Activated T-helper 2 cell treated with anti-CD3 and anti-CD28 coated beads, Interferon-gamma antibody, Interleukin-2, Interleukin-4, amounts not matched to agents 10 μg/mL and 5 μg/mL and 100 μg/mL, durations not matched to agents 14 hours and 24 hours and 36 hours (primary cell): ENCODE measurements at regions of chr6 and their contacts with region 1.

Region 1: GRCh38 chr6:73329201-73329600 is 24.9 kb downstream of the DPPA5 start:
- DNase-seq: no peak
- H3K4me3 Mint-ChIP-seq: no peak overlapping the region
- H3K27ac Mint-ChIP-seq: no peak overlapping the region
- H3K4me1 Mint-ChIP-seq: peaks cover 7% of the 10 kb centered on the region
- H3K27me3 Mint-ChIP-seq: peaks cover 35% of the 10 kb centered on the region

Region 2: DNA sequence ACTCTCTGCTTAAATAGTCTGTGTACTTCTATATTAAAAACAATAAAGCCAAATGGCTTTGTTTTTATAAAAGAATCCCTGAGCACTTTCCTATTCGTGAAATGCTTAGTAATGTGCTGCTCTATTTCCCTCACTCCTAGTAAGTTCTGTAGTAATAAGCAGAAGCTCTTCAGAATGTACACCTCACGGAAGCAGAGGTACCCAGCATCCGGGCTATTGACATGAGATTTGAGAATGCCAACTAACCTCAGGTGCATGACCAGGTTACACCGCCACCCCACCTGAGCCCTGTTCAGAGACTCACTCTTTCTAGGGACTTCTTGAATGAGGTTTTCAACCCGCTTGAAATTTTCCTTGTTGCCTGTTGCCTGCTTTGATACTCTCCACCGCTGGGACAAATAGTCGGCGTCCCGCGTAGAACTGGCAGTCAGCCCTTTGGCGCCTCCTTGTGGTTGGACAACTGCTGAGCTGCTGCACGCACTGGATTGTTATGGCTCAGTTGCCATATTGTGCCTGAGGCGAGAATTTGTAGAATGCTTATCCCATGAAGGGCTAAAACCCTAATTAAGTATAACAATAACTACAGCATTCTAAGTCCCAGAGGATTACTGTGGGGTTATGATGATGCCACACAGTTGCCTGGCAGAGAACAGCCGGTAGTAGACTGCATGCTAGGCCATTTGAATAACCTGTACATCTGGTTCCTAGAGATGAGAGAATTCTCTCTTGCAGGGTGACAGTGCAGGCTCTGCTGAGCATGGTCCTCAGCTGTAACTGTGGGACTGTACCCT is 199.4 kb before region 1 on chr6:
- intact Hi-C with region 1: loop called (anchors 5 kb)
- DNase-seq: peak; percentile 70
- H3K4me3 Mint-ChIP-seq: no peak overlapping the region
- H3K27ac Mint-ChIP-seq: no peak overlapping the region
- H3K4me1 Mint-ChIP-seq: peaks cover 5% of the 10 kb centered on the region
- H3K27me3 Mint-ChIP-seq: peaks cover 9% of the 10 kb centered on the region

Region 3: GRCh38 chr6:73180763-73181619 is 148.2 kb before region 1 on chr6:
- intact Hi-C with region 1: loop called (anchors 10 kb)
- DNase-seq: no peak
- H3K4me3 Mint-ChIP-seq: no peak overlapping the region
- H3K27ac Mint-ChIP-seq: no peak overlapping the region
- H3K4me1 Mint-ChIP-seq: peaks cover 4% of the 10 kb centered on the region
- H3K27me3 Mint-ChIP-seq: no peaks in the 10 kb centered on the region

Region 4: GRCh38 chr6:73285674-73286283 is 43.4 kb before region 1 on chr6:
- intact Hi-C with region 1: loop called (anchors 1 kb)
- DNase-seq: no peak
- H3K4me3 Mint-ChIP-seq: no peak overlapping the region
- H3K27ac Mint-ChIP-seq: no peak overlapping the region
- H3K4me1 Mint-ChIP-seq: peaks cover 11% of the 10 kb centered on the region
- H3K27me3 Mint-ChIP-seq: no peaks in the 10 kb centered on the region

Region 5: GRCh38 chr6:73309769-73310502 is 19.3 kb before region 1 on chr6:
- intact Hi-C with region 1: no loop called
- DNase-seq: peak; percentile 52
- H3K4me3 Mint-ChIP-seq: peak overlapping the region; percentile 95
- H3K27ac Mint-ChIP-seq: peak overlapping the region; percentile 79
- H3K4me1 Mint-ChIP-seq: peaks cover 26% of the 10 kb centered on the region
- H3K27me3 Mint-ChIP-seq: peaks cover 38% of the 10 kb centered on the region